Psoas muscle (tissue), 8 donors: ENCODE measurements at regions of chr15 and their contacts with region 1.

Region 1: GRCh38 chr15:47293466-47294162 is 423.7 kb upstream of the SEMA6D start:
- DNase-seq: peak; percentile 69 to 85
- ATAC-seq: peak; percentile 42 to 82 (median 56)
- H3K4me3 ChIP-seq: no peak overlapping the region
- H3K27ac ChIP-seq: no peak overlapping the region
- H3K4me1 ChIP-seq: peaks cover 8% of the 10 kb centered on the region
- H3K27me3 ChIP-seq: no peaks in the 10 kb centered on the region
- CTCF ChIP-seq: no peak

Region 2: DNA sequence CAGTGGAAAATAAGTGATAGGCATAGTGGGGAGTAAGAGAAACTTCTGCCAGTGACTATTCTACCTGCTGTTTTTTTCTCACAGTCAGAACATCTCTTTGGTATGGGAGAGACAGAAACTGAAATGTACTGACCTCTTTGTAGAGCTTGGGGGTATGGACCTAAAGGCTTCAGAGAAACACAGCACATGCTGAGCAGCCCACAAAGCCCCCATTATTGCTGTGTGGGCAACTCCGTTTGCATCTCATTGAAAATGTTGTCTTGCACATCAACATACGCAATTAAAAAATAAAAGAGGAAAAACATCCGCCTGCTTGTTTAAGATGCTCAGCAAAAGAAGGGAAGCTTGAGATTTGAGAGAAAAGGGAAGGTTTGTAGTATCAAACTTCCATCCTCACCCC is 19.8 kb before region 1 on chr15:
- intact Hi-C with region 1: loop called in 1 of 2 experiments (anchors 2 kb)
- DNase-seq: no peak
- ATAC-seq: no peak
- H3K4me3 ChIP-seq: no peak overlapping the region
- H3K27ac ChIP-seq: no peak overlapping the region
- H3K4me1 ChIP-seq: no peaks in the 10 kb centered on the region
- H3K27me3 ChIP-seq: no peaks in the 10 kb centered on the region
- CTCF ChIP-seq: no peak

Region 3: DNA sequence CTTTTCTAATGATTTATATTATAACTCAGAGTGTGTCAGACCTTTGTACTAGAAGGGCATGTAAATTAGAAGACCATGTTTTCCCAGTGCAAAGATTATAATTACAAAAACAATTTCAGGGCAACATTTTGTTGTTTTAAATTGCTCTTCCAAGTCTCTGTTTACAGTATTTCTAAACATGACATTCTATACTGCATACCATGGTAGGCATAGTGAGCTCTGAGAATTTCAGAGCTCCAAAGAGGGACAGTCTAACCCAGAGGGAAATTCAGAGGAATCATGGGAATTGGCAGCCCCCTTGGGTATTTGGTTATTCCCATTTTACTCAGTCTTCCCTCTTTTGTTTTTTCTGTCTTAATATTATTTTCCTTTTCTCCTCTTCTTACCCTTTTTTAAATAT is 62.1 kb after region 1 on chr15:
- intact Hi-C with region 1: loop called in 1 of 2 experiments (anchors 10 kb)
- DNase-seq: no peak
- ATAC-seq: no peak
- H3K4me3 ChIP-seq: no peak overlapping the region
- H3K27ac ChIP-seq: no peak overlapping the region
- H3K4me1 ChIP-seq: no peaks in the 10 kb centered on the region
- H3K27me3 ChIP-seq: no peaks in the 10 kb centered on the region
- CTCF ChIP-seq: no peak

Region 4: GRCh38 chr15:47460795-47461573 is 167.4 kb after region 1 on chr15:
- intact Hi-C with region 1: no loop called
- DNase-seq: no peak
- ATAC-seq: no peak
- H3K4me3 ChIP-seq: no peak overlapping the region
- H3K27ac ChIP-seq: no peak overlapping the region
- H3K4me1 ChIP-seq: no peaks in the 10 kb centered on the region
- H3K27me3 ChIP-seq: no peaks in the 10 kb centered on the region
- CTCF ChIP-seq: no peak